ENCODE measurements at regions of chr3 and their contacts with region 1.

Region 1: DNA sequence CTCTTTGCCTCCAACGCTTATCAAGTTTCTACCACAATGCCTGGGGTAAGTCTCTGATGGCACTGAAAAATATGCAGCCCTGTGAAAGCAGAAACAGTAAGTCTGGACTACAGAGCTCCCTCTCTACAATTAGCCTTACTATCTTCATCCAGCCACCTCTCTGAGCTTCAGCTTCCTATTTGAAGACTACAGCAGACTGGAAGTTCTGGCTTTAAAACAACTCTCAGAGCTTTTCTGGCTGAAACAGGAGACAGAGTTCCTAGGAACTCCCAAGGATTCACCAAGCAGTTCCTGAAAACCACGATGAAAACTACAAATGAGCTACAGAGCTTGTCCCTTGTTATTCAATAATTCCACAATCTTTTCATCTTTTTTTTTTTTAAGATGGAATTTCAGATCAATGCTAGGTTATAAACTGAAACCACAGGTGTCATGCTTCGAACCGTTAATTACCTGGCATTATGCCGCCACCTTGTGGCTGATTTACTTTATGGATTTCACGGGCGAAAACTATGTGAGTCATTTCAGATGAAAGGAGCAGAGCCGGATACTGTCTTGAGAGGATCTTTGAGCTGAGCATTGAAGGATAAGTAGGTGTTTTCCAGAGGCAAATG is 3.9 kb downstream of the CRYGS start:
- DNase-seq: peak; percentile 66 to 92 (median 80)
- ATAC-seq: peak; percentile 98
- H3K4me3 ChIP-seq: no peak overlapping the region
- H3K4me3 Mint-ChIP-seq: no peak overlapping the region
- H3K27ac ChIP-seq: no peak overlapping the region
- H3K27ac Mint-ChIP-seq: no peak overlapping the region
- H3K4me1 ChIP-seq: peaks cover 4% of the 10 kb centered on the region
- H3K4me1 Mint-ChIP-seq: peaks cover 7% of the 10 kb centered on the region
- H3K27me3 ChIP-seq: no peaks in the 10 kb centered on the region
- H3K27me3 Mint-ChIP-seq: no peaks in the 10 kb centered on the region
- CTCF ChIP-seq: peak; percentile 84

Region 2: DNA sequence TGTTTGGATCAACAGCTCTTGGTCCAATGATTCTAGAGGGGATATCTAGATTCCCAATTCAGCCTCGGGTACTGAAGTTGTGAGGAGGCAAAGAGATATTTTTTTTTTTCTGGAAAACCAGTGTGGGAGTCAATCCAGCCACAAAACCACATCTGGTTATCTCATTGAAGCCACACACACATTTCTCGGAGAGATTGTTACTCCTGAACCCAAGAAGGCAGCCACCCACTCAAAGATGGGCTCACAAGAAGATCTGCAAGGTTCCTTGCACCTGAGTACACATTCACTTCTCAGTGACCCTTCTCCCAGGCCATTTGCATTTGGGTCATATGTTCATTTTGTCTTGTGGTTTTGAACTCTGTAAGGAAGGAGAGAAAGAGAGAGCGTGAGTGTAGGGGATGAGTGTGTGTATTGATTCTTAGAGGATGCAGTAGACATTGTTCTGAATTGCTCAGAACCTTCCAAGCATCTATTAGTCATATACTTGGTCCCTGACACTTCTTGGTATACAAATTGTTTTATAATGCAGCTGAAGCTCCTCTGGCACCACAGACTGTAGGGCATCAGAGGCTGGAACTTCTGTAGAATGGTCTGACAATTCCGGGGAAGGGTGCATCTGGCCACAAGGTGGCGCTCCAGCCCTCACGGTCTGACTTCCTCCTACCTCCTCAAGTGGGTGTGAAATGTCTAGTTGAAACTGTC is 563.2 kb before region 1 on chr3:
- CTCF ChIA-PET with region 1: interaction called, 9 read pairs
- POLR2A ChIA-PET with region 1: no interaction called
- intact Hi-C with region 1: loop called in 1 of 2 experiments (anchors 1 kb)
- DNase-seq: peak; percentile 59 to 88 (median 76)
- ATAC-seq: peak; percentile 87
- H3K4me3 ChIP-seq: no peak overlapping the region
- H3K4me3 Mint-ChIP-seq: no peak overlapping the region
- H3K27ac ChIP-seq: no peak overlapping the region
- H3K27ac Mint-ChIP-seq: no peak overlapping the region
- H3K4me1 ChIP-seq: no peaks in the 10 kb centered on the region
- H3K4me1 Mint-ChIP-seq: peaks cover 8% of the 10 kb centered on the region
- H3K27me3 ChIP-seq: no peaks in the 10 kb centered on the region
- H3K27me3 Mint-ChIP-seq: no peaks in the 10 kb centered on the region
- CTCF ChIP-seq: peak; percentile 95

Region 3: GRCh38 chr3:186259612-186260383 is 280.5 kb before region 1 on chr3:
- CTCF ChIA-PET with region 1: interaction called, 17 read pairs
- POLR2A ChIA-PET with region 1: interaction called, 10 read pairs
- intact Hi-C with region 1: loop called (anchors 1 kb)
- DNase-seq: peak; percentile 26 to 81 (median 58)
- ATAC-seq: peak; percentile 95
- H3K4me3 ChIP-seq: no peak overlapping the region
- H3K4me3 Mint-ChIP-seq: no peak overlapping the region
- H3K27ac ChIP-seq: no peak overlapping the region
- H3K27ac Mint-ChIP-seq: no peak overlapping the region
- H3K4me1 ChIP-seq: peaks cover 14% of the 10 kb centered on the region
- H3K4me1 Mint-ChIP-seq: peaks cover 15% of the 10 kb centered on the region
- H3K27me3 ChIP-seq: no peaks in the 10 kb centered on the region
- H3K27me3 Mint-ChIP-seq: no peaks in the 10 kb centered on the region
- CTCF ChIP-seq: peak; percentile 76

Region 4: DNA sequence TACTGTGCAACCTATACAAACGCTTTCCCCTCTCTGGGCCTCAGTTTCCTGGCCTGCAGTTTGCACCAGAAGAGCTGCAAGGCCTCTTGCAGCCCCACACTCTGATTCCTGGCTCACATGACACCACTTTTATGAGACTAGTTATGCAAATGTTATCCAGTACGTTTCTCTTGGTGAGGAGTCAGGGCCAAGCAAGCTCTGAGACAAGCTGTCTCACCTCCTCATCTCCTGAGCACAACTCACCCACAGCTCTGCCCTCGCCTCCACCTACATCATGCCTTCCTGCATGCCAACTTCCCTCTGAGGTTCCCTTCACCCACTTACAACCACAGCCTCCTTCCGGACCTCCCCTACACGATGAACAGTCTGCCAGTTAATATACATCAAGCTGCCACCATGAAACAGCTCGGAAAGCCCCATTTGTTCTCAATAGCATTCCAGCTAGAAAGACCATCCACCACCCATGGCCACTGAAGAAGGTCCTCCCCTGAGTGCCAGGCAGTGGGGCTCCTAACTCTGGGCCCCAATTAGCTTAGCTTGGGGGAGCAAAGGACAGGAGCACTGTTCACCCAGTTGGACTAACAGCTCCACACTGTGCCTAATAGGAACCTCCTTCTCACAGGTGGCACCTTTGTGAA is 21.2 kb before region 1 on chr3:
- CTCF ChIA-PET with region 1: interaction called, 19 read pairs
- POLR2A ChIA-PET with region 1: interaction called, 28 read pairs
- intact Hi-C with region 1: loop called in 1 of 2 experiments (anchors 2 kb)
- DNase-seq: peak; percentile 50 to 91 (median 60)
- ATAC-seq: peak; percentile 96
- H3K4me3 ChIP-seq: no peak overlapping the region
- H3K4me3 Mint-ChIP-seq: peak overlapping the region; percentile 46
- H3K27ac ChIP-seq: peak overlapping the region; percentile 58 to 65
- H3K27ac Mint-ChIP-seq: peak overlapping the region; percentile 78
- H3K4me1 ChIP-seq: peaks cover 74% of the 10 kb centered on the region
- H3K4me1 Mint-ChIP-seq: peaks cover 66% of the 10 kb centered on the region
- H3K27me3 ChIP-seq: no peaks in the 10 kb centered on the region
- H3K27me3 Mint-ChIP-seq: no peaks in the 10 kb centered on the region
- CTCF ChIP-seq: no peak

Measured in CD4-positive, alpha-beta T cell (primary cell).